Activated CD4-positive, alpha-beta T cell treated with anti-CD3 and anti-CD28 coated beads, Interleukin-2, amount 10 ng/mL, durations not matched to agents 24 days and 14 days (primary cell): ENCODE measurements at regions of chr10 and their contacts with region 1.

Region 1: DNA sequence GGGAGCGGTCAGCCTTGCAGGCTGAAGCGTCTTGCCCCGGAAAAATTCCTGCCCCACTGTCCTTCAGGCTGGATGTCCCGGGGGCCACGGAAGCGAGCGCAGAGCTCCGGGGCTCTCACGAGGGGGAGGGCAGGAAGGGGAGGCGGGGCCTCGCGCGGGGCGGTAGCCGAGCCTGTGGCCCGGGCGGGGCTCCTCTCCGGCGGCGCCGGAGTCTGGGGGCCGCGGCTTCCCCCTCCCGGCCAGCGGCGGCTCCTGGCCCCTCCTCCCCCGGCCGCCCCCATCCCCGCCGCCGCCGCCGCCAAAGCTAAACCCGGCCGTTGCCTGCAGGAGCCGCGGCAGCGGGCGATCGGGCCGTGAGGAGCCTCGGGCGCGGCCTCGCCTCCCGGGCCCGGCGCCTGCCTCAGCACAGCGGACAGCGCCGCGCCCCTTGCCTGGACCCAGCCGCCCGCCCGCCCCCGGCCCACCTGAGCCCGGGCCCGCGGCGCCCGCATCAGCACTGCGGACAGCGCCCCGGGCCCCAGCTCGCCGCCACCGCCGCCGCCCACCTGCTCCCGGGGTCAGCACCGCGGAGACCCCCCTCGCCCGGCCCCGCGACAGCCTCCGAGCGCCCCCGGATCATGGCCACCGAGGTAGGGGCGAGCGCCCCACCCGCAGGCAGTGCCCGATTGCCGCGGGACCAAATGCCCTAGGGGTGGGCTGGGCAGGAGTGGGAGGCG is at the start of gene GOLGA7B:
- DNase-seq: peak; percentile 92
- H3K4me3 Mint-ChIP-seq: peak within 1 kb of the TSS; percentile 94
- H3K27ac Mint-ChIP-seq: peak within 1 kb of the TSS; percentile 79
- H3K4me1 Mint-ChIP-seq: peaks cover 34% of the 10 kb centered on the region
- H3K27me3 Mint-ChIP-seq: peaks cover 7% of the 10 kb centered on the region
- total RNA-seq, gene GOLGA7B: 0.33 and 0.37 TPM in 2 replicates

Region 2: DNA sequence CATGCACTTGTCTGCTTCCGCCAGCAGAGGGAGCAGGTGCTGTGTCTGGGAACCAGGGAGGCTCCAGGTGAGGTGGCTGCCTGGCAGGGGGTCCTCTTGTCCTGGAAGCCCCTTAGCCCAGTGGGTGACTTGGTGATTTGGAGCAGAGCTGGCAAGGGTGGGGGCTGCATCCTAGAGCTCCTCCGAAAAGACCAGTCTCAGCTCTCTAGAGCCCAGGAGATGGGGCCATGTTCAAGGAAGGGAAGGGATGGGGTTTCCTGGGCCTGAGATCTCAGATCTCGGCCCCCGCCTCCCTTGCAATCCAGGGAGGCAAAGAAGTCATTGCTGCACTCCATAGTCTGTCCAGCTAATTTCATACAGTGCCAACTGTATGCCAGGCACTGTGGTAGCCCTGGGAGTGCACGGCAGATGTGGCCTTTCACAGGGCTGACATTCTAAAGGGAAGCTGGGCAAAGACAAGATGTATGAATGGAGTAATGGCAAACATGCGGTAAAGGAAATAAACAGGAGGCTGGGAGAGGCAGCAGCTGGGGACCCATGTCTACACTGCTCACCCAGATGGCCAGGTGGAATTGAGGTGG is 57.6 kb before region 1 on chr10:
- intact Hi-C with region 1: loop called (anchors 5 kb)
- DNase-seq: peak; percentile 92
- H3K4me3 Mint-ChIP-seq: no peak overlapping the region
- H3K27ac Mint-ChIP-seq: no peak overlapping the region
- H3K4me1 Mint-ChIP-seq: peaks cover 21% of the 10 kb centered on the region
- H3K27me3 Mint-ChIP-seq: peaks cover 13% of the 10 kb centered on the region

Region 3: GRCh38 chr10:97869091-97870042 is 19.5 kb after region 1 on chr10:
- intact Hi-C with region 1: loop called (anchors 2 kb)
- DNase-seq: peak; percentile 95
- H3K4me3 Mint-ChIP-seq: peak overlapping the region; percentile 41
- H3K27ac Mint-ChIP-seq: peak overlapping the region; percentile 51
- H3K4me1 Mint-ChIP-seq: peaks cover 11% of the 10 kb centered on the region
- H3K27me3 Mint-ChIP-seq: peaks cover 13% of the 10 kb centered on the region

Region 4: GRCh38 chr10:97903128-97904017 is 53.5 kb after region 1 on chr10:
- intact Hi-C with region 1: no loop called
- DNase-seq: no peak
- H3K4me3 Mint-ChIP-seq: no peak overlapping the region
- H3K27ac Mint-ChIP-seq: no peak overlapping the region
- H3K4me1 Mint-ChIP-seq: no peaks in the 10 kb centered on the region
- H3K27me3 Mint-ChIP-seq: peaks cover 3% of the 10 kb centered on the region

Region 5: GRCh38 chr10:98134431-98135221 is 284.8 kb after region 1 on chr10 and contains the start of gene R3HCC1L:
- intact Hi-C with region 1: loop called (anchors 10 kb)
- DNase-seq: peak; percentile 98
- H3K4me3 Mint-ChIP-seq: peak within 1 kb of the TSS; percentile 94
- H3K27ac Mint-ChIP-seq: peak within 1 kb of the TSS; percentile 88
- H3K4me1 Mint-ChIP-seq: peaks cover 36% of the 10 kb centered on the region
- H3K27me3 Mint-ChIP-seq: peaks cover 2% of the 10 kb centered on the region
- total RNA-seq, gene R3HCC1L: 17.6 and 19.3 TPM in 2 replicates